ENCODE measurements at regions of chr1 and their contacts with region 1.

Region 1: GRCh38 chr1:36450270-36450918 is at the start of gene OSCP1:
- DNase-seq: peak; percentile 92
- H3K4me3 Mint-ChIP-seq: peak within 1 kb of the TSS; percentile 88
- H3K27ac Mint-ChIP-seq: peak within 1 kb of the TSS; percentile 79
- H3K4me1 Mint-ChIP-seq: peaks cover 14% of the 10 kb centered on the region
- H3K27me3 Mint-ChIP-seq: no peaks in the 10 kb centered on the region
- total RNA-seq, gene OSCP1: 1.8 to 2.7 TPM

Region 2: DNA sequence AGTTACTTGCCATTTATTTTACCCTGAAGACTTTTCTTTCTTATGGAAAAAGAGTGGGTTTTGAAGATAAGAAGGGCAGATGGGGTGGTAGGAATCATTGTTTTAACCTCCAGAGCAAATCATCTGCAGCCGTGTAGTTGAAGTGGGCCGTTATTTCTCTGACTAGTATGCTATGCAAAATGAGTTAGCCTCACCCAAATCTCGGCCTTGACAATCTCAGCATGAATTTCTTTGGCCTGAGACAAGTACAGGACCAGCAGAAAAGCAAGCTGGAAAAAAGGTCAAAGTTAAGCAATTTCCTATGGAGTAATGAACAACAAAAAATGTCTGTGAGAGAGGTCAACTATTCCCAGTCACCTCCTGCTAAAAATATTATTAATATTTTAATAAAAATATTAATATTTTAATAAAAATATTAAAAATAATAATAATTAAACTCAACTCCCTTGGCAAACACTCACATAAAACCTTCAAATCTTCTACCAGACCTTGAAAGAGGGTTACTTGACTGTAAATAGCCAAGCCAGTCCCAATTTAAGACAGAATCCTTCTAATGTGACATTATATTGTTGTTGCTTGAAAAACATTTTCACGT is 373.3 kb before region 1 on chr1:
- CTCF ChIA-PET with region 1: no interaction called
- POLR2A ChIA-PET with region 1: no interaction called
- intact Hi-C with region 1: no loop called
- DNase-seq: no peak
- H3K4me3 Mint-ChIP-seq: no peak overlapping the region
- H3K27ac Mint-ChIP-seq: no peak overlapping the region
- H3K4me1 Mint-ChIP-seq: no peaks in the 10 kb centered on the region
- H3K27me3 Mint-ChIP-seq: peaks cover 2% of the 10 kb centered on the region

Region 3: DNA sequence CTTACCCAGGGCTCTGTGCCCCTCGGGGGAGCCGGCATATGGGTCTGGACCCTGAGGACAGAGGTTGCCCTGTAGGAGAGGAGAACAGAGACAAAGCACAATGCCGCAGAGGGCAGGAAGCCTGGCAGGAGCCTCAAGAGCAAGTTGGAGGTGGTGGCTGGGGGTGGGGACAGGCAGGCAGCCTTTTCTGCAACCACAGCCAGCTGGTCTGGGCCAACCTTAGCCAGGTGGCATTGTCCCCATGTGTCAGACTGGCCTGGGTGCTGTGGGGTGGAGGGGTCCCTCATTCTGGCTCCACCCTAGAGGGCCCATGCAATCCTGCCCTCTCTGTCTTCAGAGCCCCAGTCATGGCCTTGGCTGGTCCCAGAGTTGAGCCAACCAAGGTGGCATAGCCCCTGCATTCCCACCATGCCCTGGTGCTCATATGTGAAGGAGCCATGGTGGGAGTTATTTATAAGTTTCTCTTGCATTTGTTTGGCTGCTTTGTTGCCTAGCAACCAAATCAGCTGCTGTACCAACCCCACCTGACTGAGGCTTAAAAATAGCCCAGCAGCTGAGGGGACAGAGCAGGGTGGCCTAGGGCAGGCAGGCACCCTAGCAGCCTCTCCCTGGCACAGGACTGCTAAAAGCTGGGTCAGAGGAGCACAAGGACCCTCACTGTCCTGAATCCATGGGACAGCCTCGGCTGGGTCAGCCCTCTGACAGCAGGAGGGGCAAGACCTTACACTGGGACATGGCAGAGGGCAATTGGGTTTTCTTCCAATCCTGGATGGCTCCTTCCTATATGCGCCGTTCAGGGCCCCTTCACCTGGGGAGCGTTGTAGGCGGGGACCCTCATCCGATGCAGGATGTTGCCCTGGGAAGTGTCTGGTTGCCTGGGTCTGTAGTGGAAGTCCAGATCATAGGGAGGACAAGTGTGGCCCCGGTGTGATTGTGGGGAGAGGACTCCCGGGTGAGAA is 275.0 kb before region 1 on chr1:
- CTCF ChIA-PET with region 1: no interaction called
- POLR2A ChIA-PET with region 1: no interaction called
- intact Hi-C with region 1: no loop called
- DNase-seq: no peak
- H3K4me3 Mint-ChIP-seq: no peak overlapping the region
- H3K27ac Mint-ChIP-seq: no peak overlapping the region
- H3K4me1 Mint-ChIP-seq: peaks cover 7% of the 10 kb centered on the region
- H3K27me3 Mint-ChIP-seq: no peaks in the 10 kb centered on the region

Region 4: DNA sequence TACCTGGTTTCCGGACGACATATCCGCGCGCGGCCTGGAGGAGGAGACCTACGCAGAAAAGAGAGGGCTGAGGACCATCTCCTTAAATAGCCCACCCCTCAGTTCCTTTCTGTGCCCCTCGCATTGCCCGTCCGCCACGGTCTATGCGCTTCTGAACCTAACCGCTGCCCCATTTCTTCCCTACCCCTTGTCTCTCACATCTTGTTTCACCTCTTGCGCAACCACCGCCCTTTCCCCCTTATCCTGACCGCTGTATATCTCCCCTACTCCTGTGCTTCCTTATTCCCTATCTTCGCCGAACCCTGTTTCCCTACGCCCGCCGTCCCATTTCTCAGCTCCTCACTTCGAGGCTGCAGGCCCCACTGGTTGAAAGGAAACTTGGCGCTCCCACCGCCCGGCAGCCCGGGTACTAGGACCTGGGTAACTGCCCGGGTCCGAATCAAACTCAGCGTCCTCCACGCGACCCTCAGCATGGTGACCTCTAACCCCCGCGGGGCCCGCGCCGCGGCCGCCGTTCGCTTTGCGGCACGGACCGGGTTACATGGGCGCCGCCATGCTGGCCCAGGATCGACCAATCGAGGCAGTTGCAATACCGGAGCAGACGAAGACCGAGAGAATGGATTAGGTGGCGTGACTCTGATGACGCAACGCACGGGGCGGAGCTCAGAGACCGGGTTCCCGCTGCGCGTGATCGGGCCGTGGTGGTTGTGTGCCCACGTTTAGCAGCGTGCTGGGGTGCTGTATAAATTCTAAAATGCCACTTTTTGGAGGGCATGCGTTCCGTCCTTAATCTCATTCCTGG is 13.6 kb after region 1 on chr1 and contains the start of gene MRPS15:
- CTCF ChIA-PET with region 1: interaction called, 5 read pairs
- POLR2A ChIA-PET with region 1: interaction called, 23 read pairs
- intact Hi-C with region 1: loop called (anchors 1 kb)
- DNase-seq: peak; percentile 98
- H3K4me3 Mint-ChIP-seq: peak within 1 kb of the TSS; percentile 99
- H3K27ac Mint-ChIP-seq: peak within 1 kb of the TSS; percentile 95
- H3K4me1 Mint-ChIP-seq: peaks cover 31% of the 10 kb centered on the region
- H3K27me3 Mint-ChIP-seq: no peaks in the 10 kb centered on the region
- total RNA-seq, gene MRPS15: 113 to 115 TPM

Measured in activated CD4-positive, alpha-beta memory T cell treated with anti-CD3 and anti-CD28 coated beads for 36 hours (primary cell).